Caco-2 (cell line): ENCODE measurements at regions of chr4 and their contacts with region 1.

Region 1: GRCh38 chr4:136007991-136008390 is 1524.3 kb downstream of the PCDH18 start:
- DNase-seq: no peak
- H3K4me3 ChIP-seq: no peak overlapping the region
- H3K4me3 Mint-ChIP-seq: no peak overlapping the region
- H3K27ac Mint-ChIP-seq: no peak overlapping the region
- H3K4me1 ChIP-seq: no peaks in the 10 kb centered on the region
- H3K4me1 Mint-ChIP-seq: no peaks in the 10 kb centered on the region
- H3K27me3 ChIP-seq: no peaks in the 10 kb centered on the region
- H3K27me3 Mint-ChIP-seq: no peaks in the 10 kb centered on the region
- CTCF ChIP-seq: no peak

Region 2: GRCh38 chr4:135949926-135950325 is 58.1 kb before region 1 on chr4:
- CTCF ChIA-PET with region 1: no interaction called
- POLR2A ChIA-PET with region 1: no interaction called
- intact Hi-C with region 1: loop called (anchors 2 kb)
- DNase-seq: no peak
- H3K4me3 ChIP-seq: no peak overlapping the region
- H3K4me3 Mint-ChIP-seq: no peak overlapping the region
- H3K27ac Mint-ChIP-seq: no peak overlapping the region
- H3K4me1 ChIP-seq: no peaks in the 10 kb centered on the region
- H3K4me1 Mint-ChIP-seq: no peaks in the 10 kb centered on the region
- H3K27me3 ChIP-seq: no peaks in the 10 kb centered on the region
- H3K27me3 Mint-ChIP-seq: no peaks in the 10 kb centered on the region
- CTCF ChIP-seq: no peak

Region 3: GRCh38 chr4:136400829-136401228 is 392.8 kb after region 1 on chr4:
- CTCF ChIA-PET with region 1: no interaction called
- POLR2A ChIA-PET with region 1: no interaction called
- intact Hi-C with region 1: no loop called
- DNase-seq: no peak
- H3K4me3 ChIP-seq: no peak overlapping the region
- H3K4me3 Mint-ChIP-seq: no peak overlapping the region
- H3K27ac Mint-ChIP-seq: no peak overlapping the region
- H3K4me1 ChIP-seq: no peaks in the 10 kb centered on the region
- H3K4me1 Mint-ChIP-seq: no peaks in the 10 kb centered on the region
- H3K27me3 ChIP-seq: no peaks in the 10 kb centered on the region
- H3K27me3 Mint-ChIP-seq: no peaks in the 10 kb centered on the region
- CTCF ChIP-seq: no peak